Tibial artery (tissue), 4 donors: ENCODE measurements at regions of chr18 and their contacts with region 1.

Region 1: GRCh38 chr18:80034068-80034851 is at the start of gene RBFA:
- DNase-seq: peak; percentile 98 to 99
- H3K4me3 ChIP-seq: peak within 1 kb of the TSS; percentile 82 to 93
- H3K27ac ChIP-seq: peak within 1 kb of the TSS; percentile 85 to 87
- H3K4me1 ChIP-seq: peaks cover 0 to 18% (median 8%) of the 10 kb centered on the region in 4 donors
- H3K27me3 ChIP-seq: no peaks in the 10 kb centered on the region
- CTCF ChIP-seq: peak in 1 of 2 experiments; percentile 20

Region 2: DNA sequence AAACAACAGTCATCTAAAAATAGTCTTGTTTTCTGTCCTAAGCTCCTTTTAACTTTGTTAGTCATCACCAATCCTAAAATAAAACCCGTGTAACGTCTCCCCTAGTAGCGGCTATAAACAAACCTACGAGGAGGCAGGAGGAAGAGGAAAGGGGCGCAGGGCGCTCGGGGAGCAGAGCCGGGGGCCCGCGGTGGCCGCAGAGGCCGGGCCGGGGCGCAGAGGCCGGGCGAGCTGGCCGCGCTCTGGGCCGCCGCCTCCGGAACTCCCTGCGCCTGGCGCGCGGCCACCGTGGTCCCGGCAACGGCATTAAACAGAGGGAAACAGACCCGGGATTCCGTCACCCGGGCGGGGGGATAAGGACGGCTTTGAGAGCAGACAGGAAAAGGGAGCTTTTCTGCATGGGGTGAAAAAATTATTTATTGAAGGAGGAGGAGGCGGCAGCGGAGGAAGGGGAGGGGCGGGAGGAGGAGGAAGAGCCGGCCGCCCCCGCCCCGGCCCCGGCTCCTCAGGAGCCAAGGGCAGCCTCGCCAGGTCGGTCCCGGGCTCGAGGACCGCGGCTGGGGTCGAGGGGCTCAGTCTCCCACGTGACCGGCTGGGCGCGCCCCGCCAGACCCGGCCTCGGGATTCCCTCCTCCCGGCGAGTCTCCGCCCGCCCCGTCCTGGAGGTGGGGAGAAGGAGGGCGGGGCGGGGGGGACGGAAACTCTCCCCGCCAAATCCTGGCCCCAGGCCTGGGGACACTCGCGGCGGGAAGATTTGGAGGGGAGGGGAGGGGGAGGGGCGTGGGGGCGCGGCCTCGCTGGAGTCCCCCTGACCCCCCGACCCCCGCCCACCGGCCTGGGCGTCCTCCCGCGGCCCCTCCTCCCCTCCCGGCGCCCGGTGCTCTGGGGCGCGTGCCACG is 640.4 kb before region 1 on chr18:
- intact Hi-C with region 1: loop called (anchors 5 kb)
- DNase-seq: peak; percentile 93 to 94
- H3K4me3 ChIP-seq: peak overlapping the region; percentile 60 to 69
- H3K27ac ChIP-seq: peak overlapping the region; percentile 95 to 97
- H3K4me1 ChIP-seq: peaks cover 0 to 31% (median 27%) of the 10 kb centered on the region in 4 donors
- H3K27me3 ChIP-seq: peaks cover 0 to 7% of the 10 kb centered on the region in 2 donors
- CTCF ChIP-seq: no peak

Region 3: DNA sequence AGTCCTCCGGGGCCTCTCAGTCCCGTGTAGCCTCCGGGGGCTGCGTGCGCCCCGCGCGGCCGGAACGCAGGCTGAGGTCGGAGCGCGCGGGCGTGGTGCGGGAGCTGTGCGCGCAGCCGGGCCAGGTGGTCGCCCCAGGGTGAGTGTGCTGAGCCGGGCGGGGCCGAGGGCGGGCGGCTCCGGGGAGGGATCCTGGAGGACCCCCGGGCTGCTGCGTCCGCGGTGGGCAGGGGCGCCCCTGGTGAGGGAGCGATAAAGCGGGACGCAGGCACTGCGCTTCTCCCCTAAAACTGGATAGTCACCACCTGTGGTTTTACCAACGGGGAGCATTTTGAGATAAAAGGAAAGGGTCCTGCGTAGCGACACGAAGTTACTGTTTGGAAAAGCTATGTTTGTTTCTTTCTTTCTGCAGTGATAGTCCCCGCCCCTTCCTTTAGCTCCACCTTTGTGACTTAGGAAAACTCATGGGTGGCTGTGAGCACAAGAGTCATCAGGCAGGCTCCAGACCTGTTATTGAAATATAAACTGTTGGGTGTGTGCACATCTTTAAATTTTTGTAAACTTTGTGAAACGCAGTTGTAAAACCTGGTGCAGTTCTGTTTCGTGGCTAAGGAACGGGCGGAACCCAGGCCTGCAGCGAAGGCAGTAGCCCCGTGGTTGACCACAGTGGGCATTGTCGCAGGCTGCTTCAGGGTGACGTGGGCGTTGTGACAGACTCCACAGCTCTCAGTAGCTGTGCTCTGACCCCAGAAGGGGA is 354.0 kb before region 1 on chr18:
- intact Hi-C with region 1: loop called (anchors 5 kb)
- DNase-seq: peak in 1 of 2 donors; percentile 68
- H3K4me3 ChIP-seq: peak overlapping the region; percentile 89 to 96
- H3K27ac ChIP-seq: peak overlapping the region; percentile 94 to 98
- H3K4me1 ChIP-seq: peaks cover 0 to 39% (median 36%) of the 10 kb centered on the region in 4 donors
- H3K27me3 ChIP-seq: no peaks in the 10 kb centered on the region
- CTCF ChIP-seq: no peak

Region 4: DNA sequence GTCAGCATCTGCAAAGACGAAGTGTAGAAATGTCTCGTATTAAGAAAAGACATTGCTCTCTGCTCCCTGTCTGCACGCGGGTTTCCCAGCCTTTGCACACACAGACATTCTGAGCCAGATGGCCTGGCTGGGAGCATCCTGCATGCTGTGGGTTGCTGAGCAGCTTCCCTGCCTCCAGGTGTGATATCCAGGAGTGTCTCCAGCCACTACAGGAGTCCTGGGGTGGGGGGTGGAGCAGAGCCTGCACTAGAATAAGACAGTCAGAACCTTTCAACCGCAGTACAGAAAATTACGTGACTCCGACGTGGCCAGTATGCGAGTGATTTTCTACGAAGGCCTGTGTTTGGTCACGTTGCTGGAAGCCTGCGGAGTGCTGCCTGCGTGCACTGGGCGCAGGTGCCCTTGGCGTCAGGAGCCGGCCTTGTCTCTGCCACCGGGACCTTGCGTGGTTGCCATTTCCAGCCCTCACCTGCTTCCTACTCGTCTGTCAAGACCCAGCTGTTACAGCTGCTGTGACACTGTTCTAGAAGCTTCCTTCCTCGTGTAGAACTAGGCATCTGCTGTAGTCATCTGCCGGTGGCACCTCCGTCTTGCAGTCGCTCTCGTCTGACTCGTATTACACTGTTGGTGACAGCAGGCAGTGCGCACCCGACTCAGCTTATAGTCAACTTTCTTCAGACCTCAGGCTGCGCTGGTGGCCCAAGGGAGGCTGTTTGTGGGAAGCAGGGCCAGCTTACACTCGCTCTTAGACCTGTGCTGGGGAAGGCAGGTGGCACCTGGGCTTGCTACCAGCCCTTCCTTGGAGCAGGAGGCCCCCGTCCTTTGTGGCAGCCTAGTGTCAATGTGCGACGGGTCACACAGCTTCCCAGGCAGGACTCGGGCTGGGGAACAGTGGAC is 343.4 kb before region 1 on chr18:
- intact Hi-C with region 1: no loop called
- DNase-seq: peak in 1 of 2 donors; percentile 47
- H3K4me3 ChIP-seq: no peak overlapping the region
- H3K27ac ChIP-seq: no peak overlapping the region
- H3K4me1 ChIP-seq: no peaks in the 10 kb centered on the region
- H3K27me3 ChIP-seq: no peaks in the 10 kb centered on the region
- CTCF ChIP-seq: no peak

Region 5: DNA sequence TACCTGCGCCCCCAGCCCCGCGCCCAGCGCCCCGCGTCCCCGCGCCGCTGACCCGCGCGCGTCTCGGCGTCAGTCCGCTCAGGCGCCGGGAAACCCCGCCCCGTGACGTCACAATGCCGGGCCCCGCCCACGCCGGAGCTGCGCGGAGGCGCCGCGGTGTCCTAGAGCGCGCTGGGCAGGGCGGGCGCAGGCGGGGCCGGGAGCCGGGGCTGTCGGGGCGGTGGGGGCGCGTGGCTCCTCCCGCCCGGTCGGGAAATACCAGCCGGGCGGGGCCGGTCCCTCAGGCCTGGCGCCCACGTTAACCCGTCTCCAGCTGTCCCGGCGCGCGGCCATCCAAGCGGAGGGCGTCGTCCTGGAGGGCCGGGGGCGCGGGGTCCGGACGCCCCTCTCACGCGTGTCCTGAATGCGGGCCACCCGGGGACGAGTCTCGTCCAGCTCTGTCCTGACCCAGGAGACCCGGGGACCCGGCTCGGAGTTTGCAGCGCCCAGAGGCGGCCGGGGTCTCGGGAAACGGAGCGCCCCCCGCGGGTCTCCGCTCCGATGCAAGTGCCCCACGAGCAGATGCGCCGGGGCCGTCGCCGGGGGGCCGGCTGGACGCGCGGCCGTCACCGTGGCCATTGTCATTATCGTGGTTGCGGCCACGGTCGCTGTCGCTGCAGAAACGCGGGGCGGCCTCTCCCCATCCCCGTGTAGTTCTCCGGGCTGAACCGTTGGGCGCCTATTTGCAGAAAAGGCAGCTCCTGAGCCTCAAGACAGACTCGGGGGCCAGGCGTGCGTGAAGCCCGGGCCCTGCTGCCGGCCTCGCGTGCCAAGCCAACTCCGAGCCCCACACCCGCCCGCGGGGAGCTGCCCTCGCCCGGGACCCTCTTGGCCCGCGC is 82.4 kb before region 1 on chr18 and contains the start of gene SLC66A2:
- intact Hi-C with region 1: loop called (anchors 10 kb)
- DNase-seq: peak; percentile 83 to 94
- H3K4me3 ChIP-seq: peak within 1 kb of the TSS; percentile 83 to 95
- H3K27ac ChIP-seq: peak within 1 kb of the TSS; percentile 72 to 78
- H3K4me1 ChIP-seq: peaks cover 7 to 44% (median 31%) of the 10 kb centered on the region in 4 donors
- H3K27me3 ChIP-seq: no peaks in the 10 kb centered on the region
- CTCF ChIP-seq: no peak

Region 6: DNA sequence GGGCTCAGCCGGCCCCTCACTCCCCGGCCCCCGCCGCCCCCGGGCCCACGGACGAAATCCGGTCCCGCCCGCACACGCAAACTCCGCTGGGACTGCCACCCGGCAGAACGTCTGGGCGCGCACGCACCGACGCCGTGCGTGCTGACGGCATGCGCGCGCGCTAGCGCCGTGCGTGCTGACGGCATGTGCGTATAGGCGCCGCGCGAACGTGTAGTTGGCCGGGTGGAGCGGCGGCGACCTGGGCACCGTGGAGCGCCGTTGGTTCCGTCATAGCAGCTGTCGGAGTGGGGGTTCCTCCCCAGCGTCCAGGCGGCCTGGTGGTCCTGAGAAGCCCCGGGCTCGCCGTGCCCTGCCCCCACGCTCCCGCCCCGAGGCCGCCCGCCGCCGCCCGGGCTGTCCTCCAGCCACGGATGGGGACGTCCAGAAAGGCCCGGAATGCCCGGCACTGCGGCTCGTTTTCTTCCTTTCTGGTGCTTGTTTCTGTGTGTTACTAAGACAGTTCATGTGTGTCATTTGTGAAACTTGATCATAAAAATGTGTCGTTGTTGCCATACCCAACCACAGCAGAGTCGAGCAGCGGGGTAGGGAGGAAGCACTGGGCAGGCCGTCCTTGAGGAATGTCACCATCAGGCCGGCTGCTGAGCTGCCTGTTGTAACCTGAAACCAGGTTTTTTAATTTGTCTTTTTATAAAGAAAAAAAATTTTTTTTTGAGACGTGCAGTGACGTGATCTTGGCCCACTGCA is 45.6 kb before region 1 on chr18 and contains the start of gene TXNL4A:
- intact Hi-C with region 1: loop called (anchors 2 kb)
- DNase-seq: peak; percentile 73 to 89
- H3K4me3 ChIP-seq: peak within 1 kb of the TSS; percentile 85 to 96
- H3K27ac ChIP-seq: peak within 1 kb of the TSS; percentile 98
- H3K4me1 ChIP-seq: peaks cover 0 to 29% (median 22%) of the 10 kb centered on the region in 4 donors
- H3K27me3 ChIP-seq: no peaks in the 10 kb centered on the region
- CTCF ChIP-seq: no peak

Region 7: GRCh38 chr18:80108728-80109675 is 74.7 kb after region 1 on chr18 and contains the start of gene ADNP2:
- intact Hi-C with region 1: loop called (anchors 2 kb)
- DNase-seq: peak; percentile 84 to 94
- H3K4me3 ChIP-seq: peak within 1 kb of the TSS; percentile 63 to 69
- H3K27ac ChIP-seq: peak within 1 kb of the TSS; percentile 81 to 92
- H3K4me1 ChIP-seq: peaks cover 0 to 33% (median 17%) of the 10 kb centered on the region in 4 donors
- H3K27me3 ChIP-seq: no peaks in the 10 kb centered on the region
- CTCF ChIP-seq: no peak